ENCODE measurements at regions of chr15 and their contacts with region 1.

Region 1: DNA sequence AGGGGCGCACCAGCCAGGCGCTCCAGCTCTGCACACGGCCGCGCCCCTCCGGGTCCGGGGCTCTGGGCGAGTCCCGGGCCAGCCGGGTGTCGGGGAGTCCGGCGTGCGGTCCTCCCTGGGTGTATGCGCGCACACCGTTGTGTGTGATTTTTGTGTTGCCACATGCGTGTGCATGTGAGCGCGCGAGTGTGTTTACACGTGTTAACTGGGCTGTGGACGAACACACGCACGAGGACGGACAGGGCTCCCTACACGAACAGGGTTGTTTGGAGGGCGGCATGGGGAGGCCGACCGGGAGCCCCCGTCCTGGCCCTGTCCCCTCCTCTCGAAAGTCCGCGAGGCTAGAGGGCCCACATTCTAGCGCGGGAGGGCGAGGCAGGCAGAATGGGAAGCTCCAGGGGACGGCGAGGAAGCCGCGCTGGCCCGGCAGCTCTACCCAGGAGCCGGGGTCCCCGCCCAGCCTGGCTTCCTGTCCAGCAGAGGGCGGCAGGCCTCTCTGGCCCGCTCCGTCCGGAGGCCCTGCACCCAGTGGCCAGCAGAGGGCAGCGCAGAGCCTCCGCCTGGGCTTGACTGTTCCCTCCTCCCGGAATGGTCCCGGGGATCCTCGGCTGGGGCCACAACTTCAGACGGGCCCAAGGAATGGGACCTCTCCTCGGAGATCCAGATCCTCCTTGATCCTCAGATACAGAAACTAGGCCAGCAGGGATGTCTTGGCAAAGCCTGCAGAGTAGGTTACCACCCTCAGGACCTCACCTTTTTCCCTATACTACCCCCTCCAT is 611 bp upstream of the LINGO1 start:
- DNase-seq: peak; percentile 98
- ATAC-seq: peak; percentile 63
- H3K4me3 Mint-ChIP-seq: peak overlapping the region; percentile 63
- H3K27ac Mint-ChIP-seq: peak overlapping the region; percentile 86
- H3K4me1 Mint-ChIP-seq: peaks cover 57% of the 10 kb centered on the region
- H3K27me3 Mint-ChIP-seq: peaks cover 7% of the 10 kb centered on the region
- CTCF ChIP-seq: peak; percentile 92

Region 2: DNA sequence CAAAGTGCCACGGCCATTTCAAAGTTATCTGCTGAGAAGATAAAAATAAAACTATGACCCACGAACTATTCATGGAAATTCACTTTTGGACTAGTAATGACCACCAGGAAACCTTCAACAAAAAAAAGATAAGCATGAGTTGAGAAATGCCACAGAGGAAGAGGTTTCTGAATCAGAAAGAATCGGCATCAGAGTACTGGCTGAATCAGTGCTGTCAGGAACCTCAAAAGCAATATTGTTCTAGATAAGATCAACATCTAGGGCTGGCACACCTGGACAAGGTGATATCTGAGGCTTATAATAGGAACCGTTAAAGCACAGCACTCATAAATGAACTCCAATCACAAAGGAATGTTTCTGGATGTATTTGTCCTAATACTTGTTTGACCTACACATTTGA is 286.1 kb before region 1 on chr15:
- CTCF ChIA-PET with region 1: no interaction called
- POLR2A ChIA-PET with region 1: no interaction called
- DNase-seq: no peak
- ATAC-seq: no peak
- H3K4me3 Mint-ChIP-seq: no peak overlapping the region
- H3K27ac Mint-ChIP-seq: no peak overlapping the region
- H3K4me1 Mint-ChIP-seq: peaks cover 16% of the 10 kb centered on the region
- H3K27me3 Mint-ChIP-seq: no peaks in the 10 kb centered on the region
- CTCF ChIP-seq: no peak

Region 3: DNA sequence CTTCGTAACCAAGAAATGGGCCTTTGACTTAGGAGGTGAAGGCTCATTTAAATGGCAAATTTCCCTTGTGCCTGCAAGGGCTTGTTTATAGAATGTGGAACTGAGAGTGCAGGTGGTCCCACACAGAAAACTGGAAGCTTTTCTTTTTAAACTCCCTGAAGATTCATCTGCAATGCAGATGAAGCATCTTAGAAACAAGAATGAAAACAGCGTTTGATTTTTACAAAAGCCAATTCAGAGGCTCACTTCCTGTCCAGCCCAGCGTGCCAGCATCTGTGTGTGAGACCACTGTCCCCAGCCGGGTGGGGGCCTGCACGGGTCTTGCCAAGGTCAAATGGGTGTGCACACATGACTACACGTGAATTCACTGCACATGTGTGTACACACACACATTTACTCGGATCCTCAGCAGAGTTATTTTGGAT is 95.3 kb before region 1 on chr15:
- CTCF ChIA-PET with region 1: interaction called, 29 read pairs
- POLR2A ChIA-PET with region 1: interaction called, 4 read pairs
- DNase-seq: no peak
- ATAC-seq: no peak
- H3K4me3 Mint-ChIP-seq: no peak overlapping the region
- H3K27ac Mint-ChIP-seq: peak overlapping the region; percentile 96
- H3K4me1 Mint-ChIP-seq: peaks cover 91% of the 10 kb centered on the region
- H3K27me3 Mint-ChIP-seq: peaks cover 2% of the 10 kb centered on the region; the same call in 1 of the 2 replicates
- CTCF ChIP-seq: no peak

Region 4: GRCh38 chr15:77589839-77590238 is 43.5 kb before region 1 on chr15:
- CTCF ChIA-PET with region 1: interaction called, 22 read pairs
- POLR2A ChIA-PET with region 1: no interaction called
- DNase-seq: no peak
- ATAC-seq: no peak
- H3K4me3 Mint-ChIP-seq: no peak overlapping the region
- H3K27ac Mint-ChIP-seq: peak overlapping the region; percentile 70; the same call in 1 of the 2 replicates
- H3K4me1 Mint-ChIP-seq: 0 out of 2 replicates have a peak, but pooled peaks cover 3% of the 10 kb centered on the region
- H3K27me3 Mint-ChIP-seq: no peaks in the 10 kb centered on the region; the same call in none of the 2 replicates
- CTCF ChIP-seq: no peak

Region 5: DNA sequence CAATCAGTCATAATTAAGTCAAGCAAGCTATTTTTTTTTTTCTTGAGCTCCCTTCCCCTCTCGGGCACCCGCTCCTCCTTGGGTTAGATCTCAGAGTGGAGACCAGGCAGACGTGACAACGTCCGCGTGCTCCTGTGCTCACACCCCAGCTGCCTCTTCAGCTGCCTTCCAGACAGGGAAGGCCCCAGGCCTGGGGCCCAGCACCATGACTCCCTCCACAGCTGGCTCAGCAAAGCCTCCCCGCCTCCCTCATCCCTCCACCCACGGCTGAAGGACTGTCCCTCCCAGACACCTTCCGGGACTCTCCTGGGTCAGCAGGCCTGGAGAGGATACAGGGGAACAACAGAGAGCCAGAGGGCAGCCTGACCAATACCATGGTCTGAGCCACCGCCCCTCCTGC is 87.3 kb after region 1 on chr15:
- CTCF ChIA-PET with region 1: interaction called, 10 read pairs
- POLR2A ChIA-PET with region 1: no interaction called
- DNase-seq: no peak
- ATAC-seq: no peak
- H3K4me3 Mint-ChIP-seq: no peak overlapping the region
- H3K27ac Mint-ChIP-seq: no peak overlapping the region
- H3K4me1 Mint-ChIP-seq: peaks cover 10% of the 10 kb centered on the region
- H3K27me3 Mint-ChIP-seq: no peaks in the 10 kb centered on the region
- CTCF ChIP-seq: no peak

Region 6: GRCh38 chr15:77759896-77760592 is 126.7 kb after region 1 on chr15:
- CTCF ChIA-PET with region 1: no interaction called
- POLR2A ChIA-PET with region 1: no interaction called
- DNase-seq: no peak
- ATAC-seq: no peak
- H3K4me3 Mint-ChIP-seq: no peak overlapping the region
- H3K27ac Mint-ChIP-seq: no peak overlapping the region
- H3K4me1 Mint-ChIP-seq: peaks cover 12% of the 10 kb centered on the region
- H3K27me3 Mint-ChIP-seq: no peaks in the 10 kb centered on the region
- CTCF ChIP-seq: no peak

Region 7: DNA sequence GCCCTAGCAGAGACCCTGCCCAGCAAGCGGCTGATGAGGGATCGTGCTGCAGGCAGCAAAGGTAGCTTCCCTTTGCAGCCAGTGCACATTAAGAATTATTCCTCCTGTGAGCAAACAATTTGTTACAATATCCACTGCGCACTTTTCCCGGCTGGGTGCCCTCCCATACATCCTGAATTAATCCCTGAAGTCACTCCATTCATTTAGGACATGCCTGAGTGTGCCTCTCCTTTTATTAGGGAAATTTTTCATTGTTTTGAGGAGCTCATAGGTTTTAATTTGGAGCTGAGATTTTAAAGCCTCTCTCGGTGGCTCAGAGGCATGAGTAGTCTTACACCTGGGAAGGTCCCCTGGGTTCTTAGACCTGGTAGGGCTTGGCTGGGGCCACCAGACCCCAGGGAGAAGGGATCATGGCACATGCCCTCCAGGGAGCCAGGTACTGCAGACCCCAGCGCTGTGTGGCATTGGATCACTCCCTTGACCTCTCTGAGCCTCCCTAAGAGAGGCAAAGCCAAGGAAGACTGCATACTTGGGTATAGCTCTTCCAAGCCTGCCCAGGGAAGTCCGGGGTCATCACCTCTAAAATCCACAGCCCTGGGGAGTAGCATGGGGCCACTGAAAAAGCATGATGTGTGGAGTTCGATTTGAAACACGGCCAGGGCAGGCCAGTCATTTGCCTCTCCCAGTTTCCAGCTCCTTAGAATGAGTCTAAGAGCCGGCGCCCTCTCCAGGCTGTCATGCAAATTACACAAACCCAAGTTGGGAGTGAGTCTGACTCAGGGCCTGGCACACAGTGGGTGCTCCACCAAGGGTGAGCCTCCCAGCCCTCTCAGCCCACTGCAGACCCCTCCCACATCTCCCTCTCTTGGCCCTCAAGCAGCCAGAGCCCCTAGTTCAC is 151.3 kb after region 1 on chr15:
- CTCF ChIA-PET with region 1: interaction called, 37 read pairs
- POLR2A ChIA-PET with region 1: no interaction called
- DNase-seq: peak; percentile 79
- ATAC-seq: peak; percentile 79
- H3K4me3 Mint-ChIP-seq: no peak overlapping the region
- H3K27ac Mint-ChIP-seq: no peak overlapping the region
- H3K4me1 Mint-ChIP-seq: peaks cover 20% of the 10 kb centered on the region
- H3K27me3 Mint-ChIP-seq: no peaks in the 10 kb centered on the region
- CTCF ChIP-seq: peak; percentile 58

Region 8: DNA sequence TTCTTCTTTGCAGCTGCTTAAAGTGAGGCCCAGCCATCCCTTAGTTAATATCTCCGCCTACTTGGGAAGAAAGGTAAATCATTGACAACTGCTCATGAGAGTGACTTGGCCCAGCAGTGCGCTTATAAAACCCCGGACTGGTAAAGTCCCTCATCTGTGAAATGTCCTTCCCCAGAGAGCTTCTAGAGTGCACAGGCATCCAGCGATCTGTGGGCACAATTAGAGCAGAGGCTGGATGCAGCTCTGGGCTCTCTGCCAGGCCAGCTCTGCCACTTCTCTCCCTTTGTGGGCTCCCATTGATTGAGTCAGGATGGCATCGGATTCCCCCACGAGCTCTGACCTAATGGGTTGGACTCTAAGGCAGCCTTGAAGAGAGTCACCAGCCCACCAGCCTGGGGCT is 218.4 kb after region 1 on chr15:
- CTCF ChIA-PET with region 1: interaction called, 13 read pairs
- POLR2A ChIA-PET with region 1: no interaction called
- DNase-seq: no peak
- ATAC-seq: no peak
- H3K4me3 Mint-ChIP-seq: no peak overlapping the region
- H3K27ac Mint-ChIP-seq: no peak overlapping the region
- H3K4me1 Mint-ChIP-seq: peaks cover 6% of the 10 kb centered on the region
- H3K27me3 Mint-ChIP-seq: no peaks in the 10 kb centered on the region; the same call in 1 of the 2 replicates
- CTCF ChIP-seq: no peak